Posterior vena cava (tissue), 2 donors: ENCODE measurements at regions of chr2 and their contacts with region 1.

Region 1: GRCh38 chr2:47272031-47272864 is 117.1 kb upstream of the STPG4 start:
- DNase-seq: peak; percentile 94

Region 2: DNA sequence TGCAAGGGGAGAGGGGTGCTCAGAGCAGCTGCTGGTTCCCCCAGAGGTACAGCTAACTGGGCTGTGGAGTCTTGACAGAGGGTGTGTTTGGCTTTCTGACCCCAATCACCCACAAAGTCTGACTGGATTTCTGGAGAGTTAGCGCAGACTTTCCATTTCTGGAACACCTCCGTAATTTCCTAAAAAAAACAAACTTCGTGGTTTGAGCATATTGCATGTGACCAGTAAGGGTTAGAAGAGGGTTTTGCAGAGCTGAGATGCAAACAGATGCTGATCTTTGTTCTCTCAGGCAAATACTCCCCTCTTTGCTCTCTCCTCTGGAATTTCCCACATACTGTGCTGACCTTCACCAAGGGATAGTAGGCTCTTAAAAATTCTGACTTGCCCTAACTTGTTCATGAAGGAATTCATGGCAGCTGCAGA is 837.4 kb before region 1 on chr2:
- intact Hi-C with region 1: loop called in 1 of 2 experiments (anchors 5 kb)
- DNase-seq: no peak

Region 3: GRCh38 chr2:47043142-47043890 is 228.9 kb before region 1 on chr2:
- intact Hi-C with region 1: loop called in 1 of 2 experiments (anchors 10 kb)
- DNase-seq: no peak